Left colon (tissue), 2 donors: ENCODE measurements at regions of chr7 and their contacts with region 1.

Region 1: DNA sequence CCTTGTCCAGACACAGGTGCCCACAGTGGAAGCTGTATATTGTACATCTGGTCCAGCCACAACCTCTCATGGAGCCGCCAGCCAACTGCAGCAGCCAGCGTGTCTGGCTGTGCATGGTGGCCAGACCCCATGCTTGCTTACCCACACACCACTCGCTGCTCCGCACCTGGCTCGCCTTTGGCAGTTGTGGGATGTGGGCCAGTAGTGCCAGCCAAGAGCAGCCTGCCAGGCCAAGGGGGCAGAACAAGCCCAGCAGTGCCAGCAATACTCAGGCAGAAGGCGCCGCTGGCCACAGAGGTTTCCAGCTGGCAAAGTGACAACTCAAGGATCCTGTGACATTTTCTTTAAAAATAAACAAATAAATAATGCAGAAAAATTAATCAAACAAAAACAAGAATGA is 11.7 kb upstream of the TMEM243 start:
- DNase-seq: no peak
- ATAC-seq: no peak

Region 2: DNA sequence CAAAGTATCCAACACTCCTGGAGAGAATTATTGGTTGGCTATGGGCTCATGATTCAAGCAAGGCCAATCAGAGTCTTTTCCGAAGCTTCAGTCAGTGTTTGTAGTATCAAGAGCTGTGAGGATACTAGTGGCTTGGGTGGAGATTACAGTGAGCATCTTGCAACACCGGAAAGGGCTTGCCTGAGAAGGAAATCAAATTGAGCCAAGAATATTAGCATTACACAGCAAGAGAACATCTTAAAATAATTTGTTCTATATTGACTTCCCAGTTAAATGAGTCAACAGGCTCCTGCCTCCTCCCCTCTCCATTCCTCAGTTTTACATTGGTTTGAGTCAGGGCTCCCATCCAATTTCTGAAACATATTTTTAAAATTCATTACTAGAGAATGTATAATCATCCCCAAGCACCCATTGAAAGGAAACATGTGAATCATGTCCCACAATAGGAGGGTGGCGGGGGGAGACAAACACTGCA is 299.2 kb before region 1 on chr7:
- intact Hi-C with region 1: loop called (anchors 5 to 10 kb)
- DNase-seq: no peak
- ATAC-seq: no peak

Region 3: GRCh38 chr7:86939197-86939814 is 291.9 kb before region 1 on chr7:
- intact Hi-C with region 1: loop called (anchors 5 to 10 kb)
- DNase-seq: peak in 1 of 2 donors; percentile 39
- ATAC-seq: peak; percentile 82